Activated T-helper 1 cell treated with anti-CD3 and anti-CD28 coated beads, Interleukin-12 subunit alpha, Interleukin-12 subunit beta, Interleukin-2, Interleukin-4 antibody, amounts not matched to agents 30 ng/mL and 10 ng/mL and 1 ng/mL, durations not matched to agents 14 hours and 24 hours and 36 hours (primary cell): ENCODE measurements at regions of chr12 and their contacts with region 1.

Region 1: GRCh38 chr12:53561590-53561953 is 54.3 kb upstream of the NPFF start:
- DNase-seq: no peak
- H3K4me3 Mint-ChIP-seq: no peak overlapping the region
- H3K27ac Mint-ChIP-seq: peak overlapping the region; percentile 73
- H3K4me1 Mint-ChIP-seq: peaks cover 41% of the 10 kb centered on the region
- H3K27me3 Mint-ChIP-seq: no peaks in the 10 kb centered on the region

Region 2: GRCh38 chr12:53543539-53543938 is 18.0 kb before region 1 on chr12:
- intact Hi-C with region 1: loop called (anchors 2 kb)
- DNase-seq: peak; percentile 38
- H3K4me3 Mint-ChIP-seq: no peak overlapping the region
- H3K27ac Mint-ChIP-seq: peak overlapping the region; percentile 75
- H3K4me1 Mint-ChIP-seq: peaks cover 13% of the 10 kb centered on the region
- H3K27me3 Mint-ChIP-seq: no peaks in the 10 kb centered on the region

Region 3: DNA sequence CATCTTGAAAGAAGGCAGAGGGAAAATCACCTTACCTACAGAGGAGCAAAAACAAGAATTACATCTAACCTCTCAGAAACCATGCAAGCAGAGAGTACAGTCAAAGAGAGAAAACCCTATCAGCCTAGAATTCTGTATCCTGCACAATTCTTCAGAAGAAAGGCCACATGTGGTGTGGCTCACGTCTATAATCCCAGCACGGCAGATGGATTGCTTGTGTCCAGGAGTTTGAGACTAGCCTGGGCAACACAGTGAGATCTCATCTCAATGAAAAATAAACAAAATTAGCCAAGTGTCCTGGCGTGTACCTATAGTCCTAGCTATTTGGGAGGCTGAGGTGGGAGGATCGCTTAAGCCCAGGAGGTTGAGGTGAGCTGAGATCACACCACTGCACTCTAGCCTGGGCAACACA is 16.4 kb after region 1 on chr12:
- intact Hi-C with region 1: loop called (anchors 1 kb)
- DNase-seq: no peak
- H3K4me3 Mint-ChIP-seq: no peak overlapping the region
- H3K27ac Mint-ChIP-seq: peak overlapping the region; percentile 73
- H3K4me1 Mint-ChIP-seq: peaks cover 30% of the 10 kb centered on the region
- H3K27me3 Mint-ChIP-seq: no peaks in the 10 kb centered on the region